ENCODE measurements at regions of chr20 and their contacts with region 1.

Region 1: GRCh38 chr20:56468316-56469082 is at the start of gene RTF2:
- DNase-seq: peak; percentile 93 to 99 (median 97)
- ATAC-seq: peak; percentile 98
- H3K4me3 ChIP-seq: peak within 1 kb of the TSS; percentile 74 to 94
- H3K4me3 Mint-ChIP-seq: peak within 1 kb of the TSS; percentile 97
- H3K27ac ChIP-seq: peak within 1 kb of the TSS; percentile 93 to 95
- H3K27ac Mint-ChIP-seq: peak within 1 kb of the TSS; percentile 100
- H3K4me1 ChIP-seq: peaks cover 29% of the 10 kb centered on the region
- H3K4me1 Mint-ChIP-seq: peaks cover 47% of the 10 kb centered on the region
- H3K27me3 ChIP-seq: no peaks in the 10 kb centered on the region
- H3K27me3 Mint-ChIP-seq: no peaks in the 10 kb centered on the region
- CTCF ChIP-seq: no peak
- total RNA-seq, gene RTF2: 56.5 to 57.6 TPM

Region 2: DNA sequence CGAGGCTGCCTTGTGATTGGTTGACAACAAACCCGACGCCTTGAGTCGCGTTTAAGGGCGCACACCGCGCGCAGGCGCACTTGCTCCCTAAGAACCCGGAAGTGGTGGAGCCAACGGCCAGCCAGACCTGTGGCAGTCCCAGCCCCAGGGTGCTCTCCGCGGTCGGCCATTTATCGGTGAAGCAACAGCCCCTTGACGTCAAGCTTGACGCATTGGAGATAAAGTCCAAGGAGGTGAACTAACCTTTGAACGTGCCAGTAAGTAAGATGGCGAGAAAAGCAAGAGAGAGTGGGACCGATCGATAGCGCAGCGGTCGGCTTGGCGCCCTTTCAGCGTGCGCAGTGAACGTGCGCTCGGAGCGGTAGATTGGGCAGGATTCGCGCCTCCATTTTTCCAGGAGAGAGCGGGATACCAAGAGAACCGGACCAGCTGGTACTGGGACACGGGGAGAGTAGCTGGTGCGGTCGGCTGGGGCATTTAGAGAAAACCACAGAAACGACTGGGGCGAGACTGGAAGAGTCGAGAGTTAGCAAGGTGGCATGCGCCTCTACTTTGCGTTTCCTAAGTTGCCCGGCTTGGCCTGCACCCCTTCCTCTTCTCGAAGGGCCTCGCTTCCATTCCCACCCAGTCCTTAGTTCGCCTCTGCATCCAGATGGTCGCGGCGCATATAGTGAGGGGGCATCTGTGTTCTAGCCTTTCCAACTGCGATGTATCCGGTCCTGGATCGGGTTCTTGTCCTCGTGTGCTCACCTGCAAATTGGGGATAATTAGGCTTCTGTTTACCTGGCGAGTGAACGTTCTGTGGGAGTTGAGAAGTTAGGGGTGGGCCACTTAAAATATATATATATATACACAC is 76.0 kb before region 1 on chr20 and contains the start of gene CSTF1:
- CTCF ChIA-PET with region 1: interaction called, 3 read pairs
- POLR2A ChIA-PET with region 1: interaction called, 9 read pairs
- intact Hi-C with region 1: loop called (anchors 1 kb)
- DNase-seq: peak; percentile 98 to 99 (median 99)
- ATAC-seq: peak; percentile 84
- H3K4me3 ChIP-seq: peak within 1 kb of the TSS; percentile 91
- H3K4me3 Mint-ChIP-seq: no peak within 1 kb of the TSS
- H3K27ac ChIP-seq: peak within 1 kb of the TSS; percentile 95 to 97
- H3K27ac Mint-ChIP-seq: no peak within 1 kb of the TSS
- H3K4me1 ChIP-seq: peaks cover 17% of the 10 kb centered on the region
- H3K4me1 Mint-ChIP-seq: peaks cover 27% of the 10 kb centered on the region
- H3K27me3 ChIP-seq: no peaks in the 10 kb centered on the region
- H3K27me3 Mint-ChIP-seq: no peaks in the 10 kb centered on the region
- CTCF ChIP-seq: no peak
- total RNA-seq, gene CSTF1: 20.7 to 26.0 TPM

Region 3: DNA sequence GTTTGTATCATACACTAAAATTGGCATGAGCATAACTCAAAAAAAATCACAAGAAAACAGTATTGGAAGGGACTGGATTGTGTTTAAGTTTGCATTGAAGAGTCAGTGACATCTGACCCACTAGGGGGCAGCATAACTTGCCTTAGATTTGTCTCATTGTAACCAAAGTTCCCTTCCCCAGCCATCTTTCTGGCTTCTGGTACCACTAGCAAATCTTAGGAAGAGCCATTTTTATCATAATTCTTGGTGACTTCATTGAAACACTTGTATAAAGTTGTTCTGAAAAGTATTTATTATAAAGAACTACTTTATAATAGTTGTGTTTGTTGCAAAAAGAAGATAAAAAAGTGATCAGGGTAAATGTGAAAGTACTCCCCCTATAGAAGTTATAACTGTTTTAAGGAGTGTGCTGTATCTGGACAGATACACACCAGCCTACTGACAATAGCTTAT is 68.4 kb before region 1 on chr20:
- CTCF ChIA-PET with region 1: interaction called, 6 read pairs
- POLR2A ChIA-PET with region 1: no interaction called
- intact Hi-C with region 1: loop called (anchors 1 to 2 kb)
- DNase-seq: peak in 8 of 9 experiments; percentile 42 to 87 (median 69)
- ATAC-seq: peak; percentile 90
- H3K4me3 ChIP-seq: no peak overlapping the region
- H3K4me3 Mint-ChIP-seq: no peak overlapping the region
- H3K27ac ChIP-seq: peak overlapping the region in 1 of 2 experiments; percentile 16
- H3K27ac Mint-ChIP-seq: no peak overlapping the region
- H3K4me1 ChIP-seq: peaks cover 11% of the 10 kb centered on the region
- H3K4me1 Mint-ChIP-seq: peaks cover 21% of the 10 kb centered on the region
- H3K27me3 ChIP-seq: no peaks in the 10 kb centered on the region
- H3K27me3 Mint-ChIP-seq: no peaks in the 10 kb centered on the region
- CTCF ChIP-seq: peak; percentile 85

Region 4: DNA sequence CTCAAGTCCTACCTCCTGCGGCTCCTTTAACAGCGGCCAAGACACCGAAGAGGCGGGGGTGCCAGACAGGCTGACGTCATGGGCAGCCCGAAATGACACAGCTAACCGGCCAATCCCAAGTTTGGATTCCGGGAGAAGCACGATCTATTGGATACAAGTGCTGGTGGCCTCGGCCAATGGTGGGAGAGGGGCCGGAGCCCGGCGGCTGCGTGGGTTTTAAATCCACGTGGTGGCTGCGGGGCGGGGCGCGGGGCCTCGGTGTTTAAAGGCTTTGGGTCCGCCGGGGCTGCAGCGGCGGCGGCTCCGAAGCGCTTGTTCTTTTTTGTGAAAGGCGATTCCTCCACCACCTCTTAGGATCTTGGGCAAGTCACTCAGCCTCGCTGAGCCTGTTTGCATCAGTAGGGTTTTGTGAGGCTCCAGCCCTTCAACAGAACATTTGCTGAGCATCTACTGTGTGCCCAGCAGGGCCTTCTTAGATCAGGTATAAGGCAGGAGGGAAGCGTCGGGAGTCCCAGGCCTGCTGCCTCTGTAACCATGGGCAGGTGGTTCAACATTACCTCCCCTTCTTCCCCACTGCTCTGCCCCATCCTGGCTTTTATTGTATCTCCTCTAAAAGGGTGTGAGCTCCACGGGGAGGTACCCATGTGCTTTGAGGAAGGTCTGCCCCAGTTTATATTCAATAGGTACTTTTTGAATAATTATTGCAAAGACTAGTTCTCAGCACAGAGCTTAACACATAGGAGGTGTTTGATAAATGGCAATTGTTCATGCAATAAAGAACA is 1250.2 kb after region 1 on chr20:
- CTCF ChIA-PET with region 1: no interaction called
- POLR2A ChIA-PET with region 1: no interaction called
- intact Hi-C with region 1: loop called in 1 of 2 experiments (anchors 10 kb)
- DNase-seq: peak; percentile 78 to 96 (median 90)
- ATAC-seq: peak; percentile 97
- H3K4me3 ChIP-seq: peak overlapping the region; percentile 37 to 55
- H3K4me3 Mint-ChIP-seq: peak overlapping the region; percentile 69
- H3K27ac ChIP-seq: no peak overlapping the region
- H3K27ac Mint-ChIP-seq: peak overlapping the region; percentile 41
- H3K4me1 ChIP-seq: peaks cover 11% of the 10 kb centered on the region
- H3K4me1 Mint-ChIP-seq: peaks cover 11% of the 10 kb centered on the region
- H3K27me3 ChIP-seq: peaks cover 0 to 2% of the 10 kb centered on the region in 2 experiments
- H3K27me3 Mint-ChIP-seq: peaks cover 4% of the 10 kb centered on the region
- CTCF ChIP-seq: no peak

Measured in CD8-positive, alpha-beta T cell (primary cell).